SK-N-SH (cell line): ENCODE measurements at regions of chr15 and their contacts with region 1.

Region 1: DNA sequence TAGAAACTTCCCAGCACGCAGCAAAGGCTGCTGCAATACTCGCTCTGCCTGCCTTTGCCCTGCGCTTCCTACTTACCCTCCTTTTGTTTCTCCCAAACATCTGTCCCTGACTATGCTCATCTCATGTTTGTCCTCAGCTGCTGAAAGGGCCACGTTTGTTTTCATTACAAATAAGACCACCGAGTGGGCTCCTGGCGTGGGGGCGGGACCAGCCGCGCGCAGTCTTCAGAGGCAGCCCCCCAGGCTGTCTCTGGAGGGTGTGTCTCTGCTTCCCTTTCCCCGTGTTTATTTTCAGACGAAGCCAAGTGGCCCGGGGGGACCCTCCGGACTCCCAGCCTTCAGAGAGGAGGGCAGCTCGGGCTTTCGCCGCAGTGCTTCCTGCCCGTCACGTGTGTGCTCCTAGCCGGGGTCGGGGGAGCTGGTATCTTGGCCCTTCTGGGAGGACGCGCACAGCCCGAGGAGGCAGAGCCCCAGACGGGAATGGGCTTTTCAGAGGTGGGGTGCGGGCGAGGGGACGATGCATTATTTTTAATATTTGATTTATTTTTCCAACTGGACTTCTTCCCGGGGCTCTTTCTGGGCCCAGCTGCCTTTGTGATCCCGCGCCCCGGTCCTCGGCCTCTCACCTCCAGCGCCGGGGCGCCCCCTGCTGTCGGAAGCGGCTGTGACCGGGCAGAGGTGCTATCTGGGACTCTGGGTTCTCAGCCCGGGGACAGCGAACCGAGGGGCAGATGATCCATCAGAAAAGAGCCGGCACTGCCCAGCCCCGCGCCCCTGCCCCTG is 70.0 kb upstream of the CGNL1 start:
- DNase-seq: peak; percentile 95
- H3K4me3 ChIP-seq: peak overlapping the region; percentile 44 to 54
- H3K27ac ChIP-seq: no peak overlapping the region
- H3K4me1 ChIP-seq: peaks cover 0 to 2% of the 10 kb centered on the region in 2 experiments; a peak in 2 of 4 replicates
- H3K27me3 ChIP-seq: no peaks in the 10 kb centered on the region
- CTCF ChIP-seq: peak; percentile 85
- EP300 ChIP-seq: no peak
- RAD21 ChIP-seq: peak; percentile 83

Region 2: DNA sequence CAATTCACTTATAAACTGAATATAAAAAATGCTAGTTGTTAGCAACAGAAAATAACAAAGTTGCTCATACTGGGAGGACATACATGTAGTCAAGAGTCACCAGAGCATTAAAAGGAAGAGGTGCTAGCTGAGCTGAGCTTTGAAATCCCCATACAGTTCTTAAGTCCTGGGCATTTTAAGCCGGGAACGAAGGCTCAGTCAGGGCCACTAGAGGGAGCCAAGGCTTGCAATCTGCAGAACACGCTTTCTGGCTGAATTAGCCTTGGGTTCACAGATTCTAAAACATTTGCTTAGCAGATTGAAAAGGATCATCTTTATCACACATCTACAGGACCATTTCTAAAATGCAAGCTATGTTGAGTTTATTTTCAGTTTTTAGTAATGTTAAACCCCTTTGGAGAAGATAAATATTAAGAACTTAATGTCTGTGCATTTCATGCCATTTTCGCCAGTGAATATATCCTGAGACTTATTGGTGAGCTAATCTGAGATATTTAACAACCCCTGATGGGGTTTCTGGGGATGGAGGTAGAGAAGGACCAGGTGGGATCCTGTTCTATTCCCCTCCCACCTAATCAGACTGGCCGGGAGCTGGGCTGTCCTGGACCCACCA is 815.1 kb before region 1 on chr15:
- CTCF ChIA-PET with region 1: interaction called, 36 read pairs
- POLR2A ChIA-PET with region 1: interaction called, 5 read pairs
- DNase-seq: peak; percentile 71
- H3K4me3 ChIP-seq: no peak overlapping the region
- H3K27ac ChIP-seq: no peak overlapping the region
- H3K4me1 ChIP-seq: no peaks in the 10 kb centered on the region
- H3K27me3 ChIP-seq: no peaks in the 10 kb centered on the region
- CTCF ChIP-seq: peak; percentile 94
- EP300 ChIP-seq: no peak
- RAD21 ChIP-seq: peak; percentile 80

Region 3: DNA sequence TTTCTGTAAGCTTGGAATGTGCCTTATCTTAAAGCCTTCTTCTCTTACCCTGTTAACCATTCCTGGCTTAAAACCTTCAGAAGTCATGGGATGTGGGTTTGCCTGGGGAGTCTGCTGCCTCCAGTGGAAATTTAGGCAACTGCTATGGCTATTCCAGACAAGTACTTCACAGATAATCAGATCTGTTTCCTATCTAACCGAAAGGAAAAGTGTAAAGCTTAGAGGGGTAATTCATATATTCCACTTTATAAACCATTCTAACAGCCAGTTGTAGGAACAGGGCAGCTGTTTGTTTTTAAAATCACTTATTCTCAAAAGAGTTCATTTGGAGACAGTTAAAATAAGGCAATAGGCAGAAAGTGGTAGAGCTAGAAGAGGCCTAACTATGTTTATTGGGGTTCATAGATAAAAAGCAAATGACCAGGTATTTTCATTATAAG is 168.0 kb before region 1 on chr15:
- CTCF ChIA-PET with region 1: interaction called, 26 read pairs
- POLR2A ChIA-PET with region 1: no interaction called
- DNase-seq: peak; percentile 56
- H3K4me3 ChIP-seq: no peak overlapping the region; a peak in 1 of 4 replicates
- H3K27ac ChIP-seq: no peak overlapping the region
- H3K4me1 ChIP-seq: peaks cover 20 to 29% of the 10 kb centered on the region in 2 experiments; a peak in 3 of 4 replicates
- H3K27me3 ChIP-seq: no peaks in the 10 kb centered on the region
- CTCF ChIP-seq: peak; percentile 86
- EP300 ChIP-seq: no peak
- RAD21 ChIP-seq: peak; percentile 71

Region 4: DNA sequence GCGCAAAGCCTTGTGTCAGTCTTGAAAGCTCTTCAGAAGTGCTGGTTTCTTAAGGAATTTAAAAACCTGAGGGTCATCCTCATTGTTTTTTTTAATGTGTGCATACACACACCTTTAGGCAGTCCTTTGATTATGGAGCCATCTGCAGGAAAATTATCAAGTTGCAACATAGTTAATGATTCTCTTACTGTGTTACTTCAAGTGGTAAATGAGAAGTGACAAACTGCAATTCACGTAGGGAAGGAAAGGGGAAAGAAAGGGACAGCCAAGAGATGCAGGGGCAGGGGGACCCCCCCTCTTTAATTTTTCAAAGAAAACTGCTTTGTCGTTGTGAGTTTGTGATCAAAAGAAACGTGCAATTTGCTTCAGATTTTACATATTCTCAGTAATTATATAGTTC is 92.5 kb before region 1 on chr15:
- CTCF ChIA-PET with region 1: interaction called, 25 read pairs
- POLR2A ChIA-PET with region 1: no interaction called
- DNase-seq: peak; percentile 3
- H3K4me3 ChIP-seq: no peak overlapping the region
- H3K27ac ChIP-seq: no peak overlapping the region
- H3K4me1 ChIP-seq: peaks cover 28 to 31% of the 10 kb centered on the region in 2 experiments; a peak in 3 of 4 replicates
- H3K27me3 ChIP-seq: no peaks in the 10 kb centered on the region
- CTCF ChIP-seq: peak; percentile 67
- EP300 ChIP-seq: no peak
- RAD21 ChIP-seq: peak; percentile 89

Region 5: DNA sequence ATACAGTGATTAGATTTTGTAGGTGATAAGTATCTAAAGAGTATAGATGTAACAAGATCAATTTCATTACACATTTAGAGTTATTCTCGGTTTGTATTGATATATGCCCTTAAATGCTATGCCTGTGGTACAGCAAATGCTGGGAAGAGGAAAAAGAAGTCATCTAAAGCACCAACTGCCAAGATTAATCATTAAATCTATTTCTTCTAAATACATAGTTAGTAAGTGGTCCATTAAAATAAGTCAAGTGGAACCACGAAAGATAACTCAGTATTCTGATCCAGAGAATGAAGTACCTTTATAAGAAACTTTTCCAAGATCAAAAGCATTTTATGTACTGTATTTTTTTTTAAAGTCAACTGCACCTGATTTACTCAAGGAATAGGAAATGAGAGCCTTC is 72.2 kb before region 1 on chr15:
- CTCF ChIA-PET with region 1: interaction called, 21 read pairs
- POLR2A ChIA-PET with region 1: no interaction called
- DNase-seq: no peak
- H3K4me3 ChIP-seq: no peak overlapping the region
- H3K27ac ChIP-seq: no peak overlapping the region
- H3K4me1 ChIP-seq: peaks cover 18 to 31% of the 10 kb centered on the region in 2 experiments; a peak in 3 of 4 replicates
- H3K27me3 ChIP-seq: no peaks in the 10 kb centered on the region
- CTCF ChIP-seq: no peak
- EP300 ChIP-seq: no peak
- RAD21 ChIP-seq: no peak

Region 6: DNA sequence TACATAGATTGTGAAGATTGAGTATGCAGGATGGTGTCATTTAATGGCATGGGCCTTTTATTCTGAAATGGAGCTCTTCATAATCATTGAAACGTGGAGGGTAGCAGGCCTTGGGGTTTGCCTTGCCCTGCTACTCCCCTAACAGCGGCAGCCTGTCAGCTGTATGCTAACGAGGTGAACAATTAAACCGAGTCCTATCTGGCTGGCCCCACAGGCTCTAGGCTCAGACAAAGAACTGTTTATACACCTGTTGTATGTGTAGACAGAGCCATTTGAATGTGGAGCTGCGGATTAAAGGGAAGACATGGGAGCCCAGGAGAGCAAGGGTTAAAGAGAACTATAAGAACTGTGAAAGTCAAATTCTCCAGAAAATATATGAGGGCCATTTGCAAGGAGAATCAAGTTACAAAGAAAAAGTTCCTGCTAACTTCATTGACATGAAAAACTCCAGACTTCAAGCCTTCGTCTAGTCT is 46.7 kb before region 1 on chr15:
- CTCF ChIA-PET with region 1: interaction called, 15 read pairs
- POLR2A ChIA-PET with region 1: no interaction called
- DNase-seq: peak; percentile 12
- H3K4me3 ChIP-seq: no peak overlapping the region
- H3K27ac ChIP-seq: peak overlapping the region; percentile 33 to 67; a peak in 3 of 4 replicates
- H3K4me1 ChIP-seq: peaks cover 9 to 22% of the 10 kb centered on the region in 2 experiments
- H3K27me3 ChIP-seq: no peaks in the 10 kb centered on the region
- CTCF ChIP-seq: no peak
- EP300 ChIP-seq: no peak
- RAD21 ChIP-seq: no peak